Right cardiac atrium (tissue), 5 donors: ENCODE measurements at regions of chr3 and their contacts with region 1.

Region 1: DNA sequence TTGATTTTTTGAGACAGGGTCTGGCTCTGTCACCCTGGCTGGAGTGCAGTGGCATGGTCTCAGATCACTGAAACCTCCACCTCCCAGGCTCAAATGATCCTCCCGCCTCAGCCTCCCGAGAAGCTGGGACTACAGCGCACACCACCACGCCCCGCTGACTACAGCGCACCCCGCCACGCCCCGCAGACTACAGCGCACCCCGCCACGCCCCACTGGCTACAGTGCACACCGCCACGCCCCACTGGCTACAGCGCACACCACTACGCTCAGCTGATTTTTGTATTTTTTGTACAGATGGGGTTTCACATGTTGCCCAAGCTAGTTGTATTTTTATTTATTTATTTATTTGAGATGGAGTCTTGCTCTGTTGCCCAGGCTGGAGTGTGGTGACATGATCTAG is 35.6 kb downstream of the SLC51A start:
- DNase-seq: no peak
- ATAC-seq: peak in 1 of 2 donors; percentile 58
- H3K4me3 ChIP-seq: no peak overlapping the region
- H3K27ac ChIP-seq: no peak overlapping the region
- H3K4me1 ChIP-seq: no peaks in the 10 kb centered on the region
- H3K27me3 ChIP-seq: no peaks in the 10 kb centered on the region

Region 2: GRCh38 chr3:196202516-196202970 is 49.4 kb before region 1 on chr3:
- intact Hi-C with region 1: no loop called
- DNase-seq: peak; percentile 59 to 82 (median 80)
- ATAC-seq: peak; percentile 70 to 74
- H3K4me3 ChIP-seq: no peak overlapping the region
- H3K27ac ChIP-seq: no peak overlapping the region
- H3K4me1 ChIP-seq: no peaks in the 10 kb centered on the region
- H3K27me3 ChIP-seq: no peaks in the 10 kb centered on the region

Region 3: GRCh38 chr3:196365736-196366135 is 113.8 kb after region 1 on chr3:
- intact Hi-C with region 1: no loop called
- DNase-seq: no peak
- ATAC-seq: no peak
- H3K4me3 ChIP-seq: no peak overlapping the region
- H3K27ac ChIP-seq: no peak overlapping the region
- H3K4me1 ChIP-seq: peaks cover 3% of the 10 kb centered on the region
- H3K27me3 ChIP-seq: no peaks in the 10 kb centered on the region

Region 4: GRCh38 chr3:196518966-196519717 is 267.2 kb after region 1 on chr3:
- intact Hi-C with region 1: loop called in 2 of 4 experiments (anchors 5 to 10 kb)
- DNase-seq: peak; percentile 59 to 74 (median 61)
- ATAC-seq: peak; percentile 72 to 74
- H3K4me3 ChIP-seq: no peak overlapping the region
- H3K27ac ChIP-seq: no peak overlapping the region
- H3K4me1 ChIP-seq: no peaks in the 10 kb centered on the region
- H3K27me3 ChIP-seq: no peaks in the 10 kb centered on the region

Region 5: GRCh38 chr3:196524527-196524926 is 272.6 kb after region 1 on chr3:
- intact Hi-C with region 1: loop called in 2 of 4 experiments (anchors 5 to 10 kb)
- DNase-seq: no peak
- ATAC-seq: no peak
- H3K4me3 ChIP-seq: no peak overlapping the region
- H3K27ac ChIP-seq: no peak overlapping the region
- H3K4me1 ChIP-seq: no peaks in the 10 kb centered on the region
- H3K27me3 ChIP-seq: no peaks in the 10 kb centered on the region

Region 6: DNA sequence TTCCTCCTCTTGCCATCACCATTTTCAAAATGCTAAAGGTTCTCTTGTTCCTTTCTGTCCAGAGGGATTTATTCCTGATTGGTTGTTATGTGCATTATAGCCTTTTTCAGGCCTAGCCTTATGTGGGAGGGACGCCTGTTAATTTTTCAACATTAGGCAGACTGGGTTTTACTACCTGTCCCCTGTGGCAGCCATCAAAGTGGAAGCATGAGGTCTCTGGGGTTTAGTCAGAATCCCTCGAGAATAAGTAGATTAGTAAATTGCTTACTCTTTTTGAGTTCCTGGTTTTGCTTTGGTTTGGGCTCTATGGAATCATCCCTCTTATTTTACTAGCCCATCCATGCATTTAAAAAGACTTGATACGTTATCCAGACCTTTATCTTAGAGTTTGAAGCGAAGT is 520.2 kb after region 1 on chr3:
- intact Hi-C with region 1: no loop called
- DNase-seq: no peak
- ATAC-seq: no peak
- H3K4me3 ChIP-seq: no peak overlapping the region
- H3K27ac ChIP-seq: no peak overlapping the region
- H3K4me1 ChIP-seq: peaks cover 7% of the 10 kb centered on the region
- H3K27me3 ChIP-seq: no peaks in the 10 kb centered on the region